Activated CD4-positive, alpha-beta memory T cell treated with anti-CD3 and anti-CD28 coated beads, Interleukin-2, amount 10 ng/mL, durations not matched to agents 7 days and 5 days (primary cell): ENCODE measurements at regions of chr12 and their contacts with region 1.

Region 1: GRCh38 chr12:69330475-69331473 is 17.4 kb upstream of the LYZ start:
- DNase-seq: peak; percentile 73
- H3K4me3 Mint-ChIP-seq: peak overlapping the region; percentile 78
- H3K27ac Mint-ChIP-seq: peak overlapping the region; percentile 92
- H3K4me1 Mint-ChIP-seq: peaks cover 53% of the 10 kb centered on the region
- H3K27me3 Mint-ChIP-seq: no peaks in the 10 kb centered on the region

Region 2: DNA sequence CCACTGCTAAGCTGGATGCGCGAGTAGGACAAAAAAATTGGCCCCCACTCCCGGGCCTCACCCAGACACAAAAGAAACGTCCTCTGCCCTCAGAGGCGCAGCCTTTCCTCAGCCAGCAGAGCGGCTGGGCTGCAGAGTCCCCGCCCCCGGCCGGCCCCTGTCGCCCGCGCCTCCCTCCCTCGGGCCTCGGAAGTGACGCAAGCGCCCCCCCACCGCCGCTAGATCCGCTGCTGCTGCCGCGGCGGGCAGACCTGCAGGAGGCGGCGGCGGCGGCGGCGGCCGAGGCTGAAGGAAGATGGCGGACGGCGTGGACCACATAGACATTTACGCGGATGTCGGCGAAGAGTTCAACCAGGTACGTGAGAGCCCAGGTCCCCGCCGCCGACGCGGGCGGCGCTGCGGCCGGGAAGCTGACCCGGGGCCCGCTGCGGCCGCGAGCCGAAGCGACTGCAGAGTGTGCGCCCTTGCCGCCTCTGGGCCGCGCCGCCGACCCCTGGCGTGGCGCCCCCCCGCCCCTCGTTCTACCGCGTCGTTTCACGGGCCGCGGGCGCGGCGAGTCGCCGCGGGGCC is 91.3 kb before region 1 on chr12 and contains the start of gene CPSF6:
- CTCF ChIA-PET with region 1: interaction called, 3 read pairs
- POLR2A ChIA-PET with region 1: interaction called, 27 read pairs
- DNase-seq: peak; percentile 97
- H3K4me3 Mint-ChIP-seq: peak within 1 kb of the TSS; percentile 100
- H3K27ac Mint-ChIP-seq: peak within 1 kb of the TSS; percentile 98
- H3K4me1 Mint-ChIP-seq: peaks cover 45% of the 10 kb centered on the region
- H3K27me3 Mint-ChIP-seq: no peaks in the 10 kb centered on the region
- total RNA-seq, gene CPSF6: 89.9 to 91.6 TPM

Region 3: DNA sequence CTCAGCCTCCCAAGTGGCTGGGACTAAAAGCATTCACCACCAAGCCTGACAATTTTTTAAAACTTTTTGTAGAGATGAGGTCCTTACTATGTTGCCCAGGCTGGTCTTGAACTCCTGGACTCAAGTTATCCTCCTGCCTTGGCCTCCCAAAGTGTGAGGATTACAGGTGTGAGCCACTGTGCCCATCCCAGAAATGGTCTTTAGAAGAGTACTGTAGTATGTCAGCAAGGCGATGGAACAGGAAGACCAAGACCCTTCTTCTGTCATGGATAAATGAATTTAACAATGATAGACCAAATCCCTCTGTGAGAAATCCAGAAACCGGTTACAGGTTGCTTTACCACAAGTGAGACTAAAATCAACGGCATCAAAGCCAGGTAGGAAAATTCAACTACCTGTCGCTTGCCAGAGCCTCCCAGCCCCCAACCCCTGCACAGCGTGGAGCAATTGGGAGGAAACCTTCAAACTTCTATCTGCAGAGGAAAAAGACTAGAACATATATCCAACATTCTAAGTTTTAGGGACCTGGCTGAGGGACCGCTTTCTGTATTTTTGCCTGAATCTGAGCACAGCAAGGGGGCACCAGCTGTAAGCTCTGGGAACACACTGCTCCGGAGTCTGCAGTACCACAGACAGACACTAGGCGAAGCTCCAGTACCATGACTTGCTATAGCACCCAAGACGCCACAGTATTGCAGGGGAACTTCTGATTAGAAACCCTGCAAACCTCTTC is 40.1 kb before region 1 on chr12:
- CTCF ChIA-PET with region 1: interaction called, 14 read pairs
- POLR2A ChIA-PET with region 1: interaction called, 5 read pairs
- DNase-seq: peak; percentile 83
- H3K4me3 Mint-ChIP-seq: no peak overlapping the region
- H3K27ac Mint-ChIP-seq: no peak overlapping the region
- H3K4me1 Mint-ChIP-seq: peaks cover 5% of the 10 kb centered on the region
- H3K27me3 Mint-ChIP-seq: peaks cover 41% of the 10 kb centered on the region

Region 4: DNA sequence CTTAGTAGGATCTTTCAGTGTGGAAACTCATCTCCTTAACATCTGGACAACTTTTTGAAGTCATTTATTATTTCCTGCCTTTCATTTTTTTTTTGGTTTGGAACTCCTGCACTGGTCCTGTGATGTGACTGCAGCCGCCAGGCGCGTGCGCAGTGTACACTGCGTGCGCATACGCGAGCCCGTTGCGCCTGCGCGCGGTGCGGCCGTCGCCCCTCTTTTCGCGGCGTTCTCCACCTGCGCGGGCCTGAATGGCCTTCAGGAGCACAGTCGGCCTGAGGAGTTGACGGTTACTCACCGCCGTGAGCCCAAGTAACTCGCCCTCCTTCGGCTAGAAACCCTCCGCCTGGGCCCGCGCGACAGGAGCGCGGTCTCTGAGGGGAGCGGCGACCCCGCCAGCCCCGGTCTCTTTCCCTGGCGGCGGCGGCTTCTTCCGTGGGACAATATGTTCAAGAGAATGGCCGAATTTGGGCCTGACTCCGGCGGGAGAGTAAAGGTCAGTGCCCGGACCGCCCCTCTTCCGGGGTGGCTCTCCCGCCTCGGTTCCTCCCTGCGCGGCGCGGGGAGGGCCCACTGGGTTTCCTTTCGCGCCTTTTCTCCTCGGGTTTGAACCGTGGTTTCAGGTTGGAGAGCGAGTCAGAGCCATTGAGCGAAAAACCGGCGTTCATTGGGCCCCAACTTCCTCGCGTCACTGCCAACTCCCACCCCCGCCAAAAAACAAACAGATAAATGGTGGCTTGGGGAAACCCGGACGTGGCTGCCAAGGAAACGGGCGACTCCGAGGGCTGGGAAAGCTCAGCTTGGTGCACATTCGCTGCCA is 29.0 kb after region 1 on chr12 and contains the start of gene YEATS4:
- CTCF ChIA-PET with region 1: interaction called, 49 read pairs
- POLR2A ChIA-PET with region 1: interaction called, 38 read pairs
- DNase-seq: peak; percentile 91
- H3K4me3 Mint-ChIP-seq: peak within 1 kb of the TSS; percentile 92
- H3K27ac Mint-ChIP-seq: peak within 1 kb of the TSS; percentile 89
- H3K4me1 Mint-ChIP-seq: peaks cover 36% of the 10 kb centered on the region
- H3K27me3 Mint-ChIP-seq: peaks cover 3% of the 10 kb centered on the region
- total RNA-seq, gene YEATS4: 43.0 to 45.0 TPM

Region 5: DNA sequence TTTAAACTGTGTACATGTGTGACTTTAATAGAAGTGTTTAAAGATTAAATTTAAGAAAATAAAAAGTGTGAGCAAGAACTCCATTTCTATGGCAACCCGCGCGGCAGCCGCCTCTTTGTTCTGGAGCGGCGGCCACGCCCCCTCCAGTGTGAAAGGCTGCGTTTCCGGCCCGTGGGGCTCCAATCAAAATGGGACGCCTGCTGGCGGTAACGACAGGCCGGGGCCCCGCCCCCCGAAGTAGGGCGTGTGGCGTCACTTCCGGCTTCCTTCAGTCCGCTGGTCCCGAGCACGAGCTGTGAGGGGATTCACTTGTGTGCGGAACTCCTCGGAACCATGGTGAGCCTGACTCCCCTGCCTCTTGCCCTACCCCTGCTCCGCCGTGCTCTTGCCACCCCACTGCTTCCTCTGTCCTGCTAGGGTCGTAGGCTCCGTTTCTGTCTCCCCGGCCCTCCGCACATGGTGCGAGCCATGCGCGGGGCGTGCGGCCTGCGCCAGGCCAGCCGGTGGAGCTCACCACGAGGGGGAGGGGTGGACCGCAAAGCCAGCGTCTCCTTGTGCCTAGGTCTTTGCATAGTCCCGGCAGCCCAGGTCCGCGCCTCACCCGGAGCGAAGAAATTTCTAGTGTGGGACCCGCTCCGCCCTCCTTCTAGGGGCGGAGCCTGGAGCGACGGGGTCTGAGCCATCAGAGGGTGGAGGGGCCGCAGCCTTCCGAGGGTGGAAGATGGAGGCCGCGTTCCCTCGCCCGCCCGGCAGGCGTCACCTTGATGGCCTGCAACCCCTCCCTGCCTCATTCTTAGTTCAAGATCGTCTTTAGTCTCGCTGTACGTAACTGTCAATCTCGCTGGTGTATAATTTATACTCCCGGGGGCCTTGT is 254.7 kb after region 1 on chr12 and contains the start of gene CCT2:
- CTCF ChIA-PET with region 1: interaction called, 5 read pairs
- POLR2A ChIA-PET with region 1: interaction called, 17 read pairs
- DNase-seq: peak; percentile 96
- H3K4me3 Mint-ChIP-seq: peak within 1 kb of the TSS; percentile 94
- H3K27ac Mint-ChIP-seq: peak within 1 kb of the TSS; percentile 89
- H3K4me1 Mint-ChIP-seq: peaks cover 33% of the 10 kb centered on the region
- H3K27me3 Mint-ChIP-seq: no peaks in the 10 kb centered on the region
- total RNA-seq, gene CCT2: 131 to 135 TPM